Transverse colon (tissue), 4 donors: ENCODE measurements at regions of chr5 and their contacts with region 1.

Region 1: DNA sequence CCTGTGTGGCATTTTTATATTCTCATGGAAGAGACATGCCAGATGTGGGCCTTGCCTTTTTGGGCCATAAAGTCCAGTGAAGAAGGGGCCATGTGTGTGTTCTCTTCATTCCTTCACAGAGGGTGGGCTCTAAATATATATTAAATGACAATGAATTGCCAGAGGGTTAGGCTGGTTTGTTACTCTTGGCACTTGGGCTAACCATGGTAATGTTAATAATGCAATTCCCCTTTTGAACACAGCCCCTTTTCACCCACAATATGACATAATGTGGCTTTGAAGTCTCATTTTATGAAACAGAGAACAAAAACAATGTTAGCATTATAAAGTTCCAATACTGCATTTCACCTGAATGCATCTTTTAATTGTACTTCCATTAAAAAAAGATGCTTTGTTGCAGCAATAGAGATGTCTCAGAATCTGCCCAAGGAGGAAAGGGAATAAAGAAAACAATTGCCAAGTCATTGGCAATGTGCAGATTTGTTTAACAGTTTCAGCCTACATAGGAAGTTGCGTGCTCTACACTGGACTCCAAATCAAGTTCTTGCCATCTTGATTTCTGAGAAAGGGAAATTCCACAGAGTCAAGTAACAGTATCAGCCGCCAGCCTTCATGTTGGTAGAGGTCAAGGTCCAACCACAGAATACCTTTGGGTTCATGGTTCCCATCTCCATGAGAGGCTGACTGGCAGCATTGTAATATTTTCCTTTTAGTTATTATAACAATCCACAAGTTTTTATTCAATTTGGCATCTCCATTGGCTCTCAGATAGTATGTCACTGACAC is 141.9 kb downstream of the SLC12A2 start:
- DNase-seq: no peak
- H3K4me3 ChIP-seq: no peak overlapping the region
- H3K27ac ChIP-seq: no peak overlapping the region
- H3K4me1 ChIP-seq: no peaks in the 10 kb centered on the region
- H3K27me3 ChIP-seq: no peaks in the 10 kb centered on the region
- CTCF ChIP-seq: no peak
- EP300 ChIP-seq: no peak
- POLR2A ChIP-seq: no peak

Region 2: GRCh38 chr5:128083033-128083810 is 142.2 kb before region 1 on chr5 and contains the start of gene SLC12A2:
- in situ Hi-C with region 1: no loop called
- intact Hi-C with region 1: no loop called
- DNase-seq: peak; percentile 92
- H3K4me3 ChIP-seq: peak within 1 kb of the TSS; percentile 70 to 95 (median 94)
- H3K27ac ChIP-seq: peak within 1 kb of the TSS; percentile 93 to 99 (median 96)
- H3K4me1 ChIP-seq: peaks cover 15 to 62% (median 22%) of the 10 kb centered on the region in 4 donors
- H3K27me3 ChIP-seq: no peaks in the 10 kb centered on the region
- CTCF ChIP-seq: peak in 3 of 5 experiments; percentile 6 to 38 (median 10)
- EP300 ChIP-seq: no peak
- POLR2A ChIP-seq: peak; percentile 78
- total RNA-seq, gene SLC12A2: 40.4 to 91.1 (median 73.5) TPM

Region 3: DNA sequence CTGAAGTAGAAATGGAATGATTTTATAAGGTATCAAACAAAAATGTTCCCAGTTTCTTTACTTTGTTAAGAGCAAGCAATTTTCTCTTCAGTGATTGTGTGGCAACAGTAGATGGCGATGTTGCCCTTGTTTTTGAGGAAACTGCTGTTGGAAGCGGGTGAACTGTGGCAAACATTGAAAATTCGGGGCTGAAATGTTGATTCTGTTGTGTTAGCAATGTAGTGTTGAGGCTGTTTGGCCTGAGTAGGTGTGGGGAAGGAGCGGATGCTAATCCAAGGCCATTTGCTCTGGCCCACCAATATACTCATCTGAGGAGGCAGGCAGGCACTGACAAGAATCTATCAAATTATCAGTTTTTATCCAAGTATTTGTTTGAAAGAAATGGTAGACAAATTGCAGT is 12.1 kb before region 1 on chr5:
- in situ Hi-C with region 1: no loop called
- intact Hi-C with region 1: loop called (anchors 2 kb)
- DNase-seq: peak; percentile 41
- H3K4me3 ChIP-seq: no peak overlapping the region
- H3K27ac ChIP-seq: no peak overlapping the region
- H3K4me1 ChIP-seq: no peaks in the 10 kb centered on the region
- H3K27me3 ChIP-seq: no peaks in the 10 kb centered on the region
- CTCF ChIP-seq: peak; percentile 59 to 70 (median 68)
- EP300 ChIP-seq: no peak
- POLR2A ChIP-seq: no peak